K562 (cell line): ENCODE measurements at regions of chr11 and their contacts with region 1.

Region 1: DNA sequence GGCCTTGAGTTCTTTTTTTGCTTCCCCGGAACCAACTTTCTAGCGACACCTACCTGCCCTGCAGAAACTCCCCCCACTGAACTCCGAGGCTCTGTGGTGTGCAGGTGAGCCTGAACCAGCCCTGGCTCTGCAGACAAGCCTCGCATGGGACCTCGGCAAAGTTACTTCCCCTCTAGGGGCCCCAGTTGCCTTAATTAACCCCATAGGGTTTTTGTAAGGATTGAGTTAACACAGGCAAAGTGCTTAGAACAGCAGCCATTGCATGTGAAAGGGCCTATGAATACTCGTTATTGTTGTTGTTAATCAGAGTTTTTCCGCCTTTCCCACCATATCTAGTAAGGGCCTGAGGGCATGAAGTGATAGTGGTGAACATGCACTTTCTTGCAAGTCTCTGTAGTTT is 12.6 kb upstream of the SYT13 start:
- DNase-seq: no peak
- ATAC-seq: no peak
- H3K4me3 ChIP-seq: no peak overlapping the region
- H3K27ac ChIP-seq: no peak overlapping the region
- H3K4me1 ChIP-seq: no peaks in the 10 kb centered on the region
- H3K27me3 ChIP-seq: peaks cover 2 to 11% of the 10 kb centered on the region in 2 experiments; a peak in 3 of 5 replicates
- CTCF ChIP-seq: 0 out of 6 replicates have a peak, but pooled peaks of 1 of the 3 experiments have one; percentile 3
- EP300 ChIP-seq: no peak
- POLR2A ChIP-seq: no peak
- RAD21 ChIP-seq: no peak

Region 2: GRCh38 chr11:44936525-44936924 is 362.2 kb before region 1 on chr11:
- CTCF ChIA-PET with region 1: no interaction called
- POLR2A ChIA-PET with region 1: no interaction called
- in situ Hi-C with region 1: no loop called
- intact Hi-C with region 1: loop called (anchors 10 kb)
- DNase-seq: peak; percentile 75 to 83 (median 82)
- ATAC-seq: peak; percentile 92
- H3K4me3 ChIP-seq: no peak overlapping the region
- H3K27ac ChIP-seq: no peak overlapping the region
- H3K4me1 ChIP-seq: peaks cover 0 to 11% of the 10 kb centered on the region in 2 experiments; a peak in 1 of 5 replicates
- H3K27me3 ChIP-seq: peaks cover 0 to 23% of the 10 kb centered on the region in 2 experiments; a peak in 2 of 5 replicates
- CTCF ChIP-seq: peak; percentile 85 to 95 (median 91)
- EP300 ChIP-seq: no peak
- POLR2A ChIP-seq: no peak
- RAD21 ChIP-seq: peak; percentile 91 to 93

Region 3: DNA sequence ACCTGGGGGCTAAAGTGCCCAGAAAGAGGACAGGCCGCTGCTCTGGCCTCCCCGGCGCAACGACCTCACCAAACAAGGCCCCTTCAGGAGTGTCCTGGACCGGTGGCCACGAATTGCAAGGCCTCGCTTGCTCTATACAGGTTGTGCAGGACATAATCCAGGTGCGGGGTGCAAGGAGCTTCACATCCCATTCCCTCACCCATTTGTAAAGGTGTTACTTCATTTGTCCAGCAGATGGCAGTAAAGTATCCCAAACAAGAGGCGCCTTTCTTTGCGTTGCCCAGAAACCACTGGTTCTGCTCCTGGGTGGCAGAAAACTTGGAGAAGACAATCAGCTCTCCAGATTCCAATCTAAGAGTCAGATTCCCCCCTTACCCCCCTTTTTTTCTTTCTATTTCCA is 188.2 kb before region 1 on chr11:
- CTCF ChIA-PET with region 1: interaction called, 17 read pairs
- POLR2A ChIA-PET with region 1: no interaction called
- in situ Hi-C with region 1: loop called (anchors 25 kb)
- intact Hi-C with region 1: loop called (anchors 1 kb)
- DNase-seq: peak; percentile 67 to 74 (median 71)
- ATAC-seq: peak; percentile 86
- H3K4me3 ChIP-seq: no peak overlapping the region
- H3K27ac ChIP-seq: no peak overlapping the region
- H3K4me1 ChIP-seq: no peaks in the 10 kb centered on the region; a peak in 1 of 5 replicates
- H3K27me3 ChIP-seq: peaks cover 0 to 6% of the 10 kb centered on the region in 2 experiments; a peak in 1 of 5 replicates
- CTCF ChIP-seq: peak; percentile 58 to 87 (median 69)
- EP300 ChIP-seq: no peak
- POLR2A ChIP-seq: no peak
- RAD21 ChIP-seq: peak; percentile 88 to 89

Region 4: DNA sequence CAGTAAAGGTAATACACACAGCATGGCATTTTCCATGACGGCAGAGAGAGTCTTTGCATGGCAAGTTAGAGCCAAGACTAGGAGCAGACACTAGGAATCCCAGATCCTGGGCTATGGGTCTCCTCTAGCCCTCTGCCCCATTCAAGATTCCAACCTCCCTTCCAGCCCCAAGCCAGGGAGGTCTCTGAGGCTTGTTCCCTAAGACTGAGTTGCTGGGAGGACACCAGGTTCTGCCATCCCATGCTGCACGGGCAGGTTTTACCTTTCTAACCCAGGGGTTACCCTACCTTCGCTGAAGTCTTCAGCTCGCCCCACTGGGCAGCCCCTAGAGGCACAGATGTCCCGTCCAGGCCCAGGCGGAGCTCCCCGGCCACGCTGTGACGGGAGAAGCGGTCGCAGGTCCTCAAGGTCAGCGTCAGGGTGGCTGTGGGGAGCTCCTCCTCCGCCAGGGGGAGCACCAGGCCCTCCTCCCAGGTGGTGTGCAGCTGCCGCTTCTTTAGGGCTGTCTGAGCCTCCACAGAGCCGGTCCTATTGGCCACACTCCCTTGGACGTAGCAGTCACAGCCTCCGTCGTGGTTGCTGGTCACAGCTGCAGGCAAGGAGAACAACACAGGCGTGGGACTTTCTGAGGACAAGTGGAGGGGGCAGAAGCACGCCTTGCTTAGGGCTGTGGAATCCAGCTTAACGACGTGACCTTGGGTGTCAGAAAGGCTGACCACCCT is 46.4 kb before region 1 on chr11:
- CTCF ChIA-PET with region 1: interaction called, 5 read pairs
- POLR2A ChIA-PET with region 1: no interaction called
- in situ Hi-C with region 1: no loop called
- intact Hi-C with region 1: loop called (anchors 5 kb)
- DNase-seq: peak; percentile 70 to 83 (median 78)
- ATAC-seq: peak; percentile 100
- H3K4me3 ChIP-seq: no peak overlapping the region
- H3K27ac ChIP-seq: no peak overlapping the region
- H3K4me1 ChIP-seq: peaks cover 0 to 5% of the 10 kb centered on the region in 2 experiments; a peak in 3 of 5 replicates
- H3K27me3 ChIP-seq: peaks cover 0 to 3% of the 10 kb centered on the region in 2 experiments; a peak in 1 of 5 replicates
- CTCF ChIP-seq: peak; percentile 69 to 83 (median 77)
- EP300 ChIP-seq: no peak
- POLR2A ChIP-seq: no peak
- RAD21 ChIP-seq: peak; percentile 20 to 57; a peak in 2 of 4 replicates